IMR-90 (cell line): ENCODE measurements at regions of chr17 and their contacts with region 1.

Region 1: GRCh38 chr17:29196769-29197515 is 16.7 kb upstream of the MYO18A start:
- DNase-seq: no peak
- ATAC-seq: no peak
- H3K4me3 ChIP-seq: no peak overlapping the region
- H3K27ac ChIP-seq: no peak overlapping the region
- H3K4me1 ChIP-seq: peaks cover 2% of the 10 kb centered on the region; the same call in 1 of the 2 replicates
- H3K27me3 ChIP-seq: peaks cover 16% of the 10 kb centered on the region
- CTCF ChIP-seq: no peak
- POLR2A ChIP-seq: no peak
- RAD21 ChIP-seq: no peak

Region 2: GRCh38 chr17:29514792-29515191 is 317.9 kb after region 1 on chr17:
- CTCF ChIA-PET with region 1: no interaction called
- POLR2A ChIA-PET with region 1: interaction called, 12 read pairs
- dilution Hi-C with region 1: no loop called
- in situ Hi-C with region 1: no loop called
- intact Hi-C with region 1: no loop called
- DNase-seq: peak; percentile 43
- ATAC-seq: peak; percentile 53
- H3K4me3 ChIP-seq: no peak overlapping the region
- H3K27ac ChIP-seq: peak overlapping the region; percentile 49; the same call in 1 of the 2 replicates
- H3K4me1 ChIP-seq: peaks cover 2% of the 10 kb centered on the region
- H3K27me3 ChIP-seq: no peaks in the 10 kb centered on the region
- CTCF ChIP-seq: no peak
- POLR2A ChIP-seq: no peak
- RAD21 ChIP-seq: no peak